Activated CD8-positive, alpha-beta T cell treated with anti-CD3 and anti-CD28 coated beads, Interleukin-2, amount 10 ng/mL, durations not matched to agents 7 days and 5 days (primary cell): ENCODE measurements at regions of chr2 and their contacts with region 1.

Region 1: GRCh38 chr2:85551698-85552678 is 9.3 kb downstream of the GGCX start:
- DNase-seq: peak; percentile 94
- ATAC-seq: peak; percentile 79
- H3K4me3 Mint-ChIP-seq: no peak overlapping the region
- H3K27ac Mint-ChIP-seq: peak overlapping the region; percentile 23
- H3K4me1 Mint-ChIP-seq: peaks cover 6% of the 10 kb centered on the region
- H3K27me3 Mint-ChIP-seq: no peaks in the 10 kb centered on the region

Region 2: DNA sequence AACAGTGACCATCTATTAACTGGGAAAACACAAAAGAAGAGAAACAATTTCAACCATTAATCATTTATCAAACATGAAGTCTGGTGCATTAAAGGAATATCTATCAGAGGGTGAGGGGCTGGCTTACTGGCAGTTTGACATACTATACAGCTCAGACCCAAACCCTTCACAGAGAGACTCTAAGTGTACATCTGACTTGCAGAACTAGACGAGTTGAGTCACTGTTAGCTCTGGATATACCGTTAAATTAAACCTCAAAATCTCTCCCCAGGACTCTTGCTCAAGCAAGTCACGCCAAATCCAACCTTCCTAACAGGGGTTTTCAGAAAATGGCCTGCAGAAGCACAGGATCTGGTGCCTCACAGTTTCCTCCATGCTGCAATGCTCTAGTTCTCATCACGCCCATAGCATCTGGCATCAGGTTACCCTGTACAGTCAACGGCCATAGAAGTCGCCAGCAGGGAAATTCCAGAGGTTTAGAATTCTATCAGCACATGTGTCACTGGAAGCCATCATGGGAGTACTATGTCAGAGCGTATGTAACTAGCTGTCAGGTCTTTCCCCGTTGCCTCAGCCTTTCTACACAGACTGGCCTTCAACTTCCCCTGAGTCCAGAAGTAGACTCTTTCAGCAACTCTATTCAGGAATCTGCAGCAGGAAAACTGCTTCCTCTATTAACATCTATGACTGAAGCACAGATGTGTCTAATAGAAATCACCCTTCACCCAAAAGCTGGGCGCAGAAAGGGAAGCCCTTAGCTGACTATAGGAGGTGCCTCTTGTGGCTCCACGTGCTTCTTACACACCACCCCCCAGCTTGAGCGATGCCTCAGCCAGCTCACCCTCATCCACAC is 233.5 kb before region 1 on chr2:
- CTCF ChIA-PET with region 1: interaction called, 12 read pairs
- POLR2A ChIA-PET with region 1: interaction called, 4 read pairs
- DNase-seq: no peak
- ATAC-seq: peak; percentile 66
- H3K4me3 Mint-ChIP-seq: peak overlapping the region; percentile 57
- H3K27ac Mint-ChIP-seq: peak overlapping the region; percentile 76
- H3K4me1 Mint-ChIP-seq: peaks cover 62% of the 10 kb centered on the region
- H3K27me3 Mint-ChIP-seq: no peaks in the 10 kb centered on the region

Region 3: DNA sequence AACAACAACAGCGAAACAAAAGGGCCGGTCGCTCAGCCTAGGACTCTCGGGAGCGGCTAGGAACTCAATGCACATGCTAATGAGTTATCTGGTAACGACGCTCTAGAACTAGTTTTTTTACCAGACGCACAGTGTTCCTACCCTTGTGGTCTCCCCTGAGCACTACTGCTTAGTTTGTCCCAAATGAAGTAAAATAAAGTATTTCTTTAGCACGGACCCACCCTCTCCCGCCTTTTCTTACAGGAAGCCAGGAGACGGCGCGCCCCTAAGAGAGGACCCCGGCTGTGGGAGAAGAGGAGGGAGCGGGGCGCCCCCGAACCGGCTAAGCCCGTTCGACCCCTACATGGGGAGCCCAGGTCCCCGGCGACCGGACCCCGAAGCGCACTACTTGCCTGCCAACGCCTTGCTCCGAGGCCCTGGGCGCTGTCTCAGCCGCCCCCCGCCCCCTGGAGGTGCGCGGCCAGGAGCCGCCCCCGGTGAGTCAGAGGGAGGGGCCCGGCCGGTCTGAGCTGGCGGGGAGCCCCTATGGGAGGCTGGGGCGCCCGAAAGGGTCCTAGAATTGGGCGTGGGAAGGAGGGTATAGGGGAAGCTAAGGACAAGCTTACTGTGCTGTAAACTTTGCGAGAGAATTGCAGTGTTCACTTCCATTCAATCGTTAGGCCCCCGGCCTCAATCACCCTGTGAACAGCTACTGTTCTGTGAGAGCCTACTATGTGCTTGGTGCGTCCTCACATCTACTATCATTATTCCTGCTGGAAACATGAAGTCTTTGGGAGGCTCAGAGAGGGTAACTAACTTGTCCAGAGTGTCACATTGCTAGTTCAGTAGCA is 138.2 kb before region 1 on chr2:
- CTCF ChIA-PET with region 1: interaction called, 263 read pairs
- POLR2A ChIA-PET with region 1: interaction called, 39 read pairs
- DNase-seq: peak; percentile 46
- ATAC-seq: peak; percentile 16
- H3K4me3 Mint-ChIP-seq: peak overlapping the region; percentile 72
- H3K27ac Mint-ChIP-seq: no peak overlapping the region
- H3K4me1 Mint-ChIP-seq: peaks cover 64% of the 10 kb centered on the region
- H3K27me3 Mint-ChIP-seq: peaks cover 3% of the 10 kb centered on the region

Region 4: GRCh38 chr2:85430752-85431569 is 121.0 kb before region 1 on chr2:
- CTCF ChIA-PET with region 1: interaction called, 20 read pairs
- POLR2A ChIA-PET with region 1: no interaction called
- DNase-seq: no peak
- ATAC-seq: no peak
- H3K4me3 Mint-ChIP-seq: no peak overlapping the region
- H3K27ac Mint-ChIP-seq: no peak overlapping the region
- H3K4me1 Mint-ChIP-seq: peaks cover 11% of the 10 kb centered on the region
- H3K27me3 Mint-ChIP-seq: no peaks in the 10 kb centered on the region

Region 5: DNA sequence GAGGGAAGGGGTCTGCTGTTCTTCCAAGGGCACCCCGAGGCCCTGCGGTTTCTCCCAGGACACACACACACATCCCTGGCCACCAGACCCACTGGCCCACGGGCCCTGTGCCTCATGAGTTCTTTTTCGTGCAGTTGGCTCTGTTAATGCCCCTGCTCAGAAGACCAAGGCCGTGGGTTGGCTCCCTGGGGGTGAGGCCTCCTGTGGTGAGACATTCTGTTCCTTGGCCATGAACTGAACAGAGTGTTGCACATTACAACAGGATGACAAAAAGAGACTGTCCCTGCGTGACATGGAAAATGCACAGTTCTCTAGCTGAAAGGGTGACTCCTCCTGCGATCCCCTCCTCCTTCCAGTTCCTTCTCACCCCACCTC is 102.8 kb before region 1 on chr2:
- CTCF ChIA-PET with region 1: no interaction called
- POLR2A ChIA-PET with region 1: no interaction called
- DNase-seq: no peak
- ATAC-seq: no peak
- H3K4me3 Mint-ChIP-seq: no peak overlapping the region
- H3K27ac Mint-ChIP-seq: no peak overlapping the region
- H3K4me1 Mint-ChIP-seq: peaks cover 2% of the 10 kb centered on the region
- H3K27me3 Mint-ChIP-seq: peaks cover 2% of the 10 kb centered on the region

Region 6: GRCh38 chr2:85584857-85585783 is 33.1 kb after region 1 on chr2:
- CTCF ChIA-PET with region 1: interaction called, 11 read pairs
- POLR2A ChIA-PET with region 1: no interaction called
- DNase-seq: peak; percentile 32
- ATAC-seq: peak; percentile 61
- H3K4me3 Mint-ChIP-seq: peak overlapping the region; percentile 87
- H3K27ac Mint-ChIP-seq: peak overlapping the region; percentile 91
- H3K4me1 Mint-ChIP-seq: peaks cover 71% of the 10 kb centered on the region
- H3K27me3 Mint-ChIP-seq: no peaks in the 10 kb centered on the region